Ascending aorta (tissue), 2 donors: ENCODE measurements at regions of chr11 and their contacts with region 1.

Region 1: DNA sequence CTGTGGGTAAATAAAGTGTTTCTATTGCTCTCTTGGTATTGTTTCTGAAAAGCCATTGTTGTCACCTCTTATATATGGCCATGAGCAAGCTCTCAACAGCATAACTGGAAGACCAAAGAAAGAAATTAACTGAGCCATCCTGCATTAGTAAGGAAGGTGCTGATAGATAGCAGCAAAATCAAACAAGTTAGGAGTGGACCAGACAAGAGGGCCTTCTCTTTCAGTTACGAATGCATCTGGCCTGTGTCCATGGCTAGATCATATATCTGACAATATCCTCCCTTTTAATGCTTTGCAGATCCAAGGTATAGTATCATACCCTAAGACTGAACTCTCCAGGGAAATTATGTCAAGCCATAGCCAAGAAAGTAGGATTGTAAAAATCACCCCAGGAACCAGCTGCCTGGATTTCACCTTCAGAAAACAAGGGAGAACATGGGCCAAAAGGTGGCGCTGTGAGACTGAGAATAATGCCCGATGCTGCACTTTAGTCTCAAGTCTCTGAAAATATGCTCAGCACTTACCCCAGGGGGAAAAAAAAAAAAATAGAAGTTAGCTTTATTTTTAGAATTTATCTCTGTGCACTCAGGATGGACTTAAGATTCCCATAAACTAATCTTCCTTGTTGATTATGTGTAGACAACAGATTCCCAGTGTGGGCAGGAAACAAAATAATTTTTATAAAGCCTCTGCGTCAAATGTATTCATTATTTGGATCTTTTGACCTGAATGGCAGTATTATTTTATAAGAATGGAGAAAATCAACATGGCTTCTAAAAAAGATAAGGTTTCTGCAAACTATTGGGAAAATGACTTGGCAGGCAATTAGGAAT is 415.1 kb downstream of the ETS1 start:
- DNase-seq: peak in 1 of 2 donors; percentile 91
- H3K4me3 ChIP-seq: no peak overlapping the region
- H3K27ac ChIP-seq: no peak overlapping the region
- H3K4me1 ChIP-seq: no peaks in the 10 kb centered on the region
- H3K27me3 ChIP-seq: no peaks in the 10 kb centered on the region
- CTCF ChIP-seq: peak; percentile 48 to 84 (median 74)

Region 2: GRCh38 chr11:128422576-128423370 is 250.5 kb after region 1 on chr11:
- intact Hi-C with region 1: loop called (anchors 5 kb)
- DNase-seq: no peak
- H3K4me3 ChIP-seq: no peak overlapping the region
- H3K27ac ChIP-seq: peak overlapping the region in 1 of 2 donors; percentile 76
- H3K4me1 ChIP-seq: peaks cover 4 to 21% of the 10 kb centered on the region in 2 donors
- H3K27me3 ChIP-seq: no peaks in the 10 kb centered on the region
- CTCF ChIP-seq: no peak